ENCODE measurements at regions of chr1 and their contacts with region 1.

Region 1: GRCh38 chr1:179081687-179082332 is at the start of gene TOR3A:
- DNase-seq: peak; percentile 95
- H3K4me3 Mint-ChIP-seq: peak within 1 kb of the TSS; percentile 99
- H3K27ac Mint-ChIP-seq: peak within 1 kb of the TSS; percentile 98
- H3K4me1 Mint-ChIP-seq: peaks cover 12% of the 10 kb centered on the region
- H3K27me3 Mint-ChIP-seq: no peaks in the 10 kb centered on the region
- CTCF ChIP-seq: no peak
- total RNA-seq, gene TOR3A: 24.9 and 31.3 TPM in 2 replicates

Region 2: DNA sequence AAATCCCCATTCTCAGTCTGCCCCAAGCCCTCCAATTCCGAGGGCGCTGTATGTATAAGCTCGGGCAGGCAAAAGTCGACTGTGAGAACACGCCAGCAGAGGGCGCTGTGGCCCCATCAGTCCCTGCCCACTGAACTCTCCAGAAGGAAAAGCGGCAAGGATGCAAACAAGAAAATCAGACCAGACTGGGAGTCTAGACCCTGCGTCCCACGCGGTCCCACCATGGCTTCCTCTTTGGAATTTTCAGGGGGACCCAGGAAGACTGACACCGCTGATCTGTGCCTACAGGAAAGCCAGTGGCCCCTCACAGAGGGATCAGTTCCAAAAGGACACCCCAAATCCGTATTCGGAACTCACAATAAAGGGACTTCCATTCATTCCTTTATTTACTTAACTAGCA is 549.4 kb before region 1 on chr1:
- CTCF ChIA-PET with region 1: interaction called, 7 read pairs
- POLR2A ChIA-PET with region 1: no interaction called
- intact Hi-C with region 1: loop called (anchors 2 kb)
- DNase-seq: peak; percentile 88
- H3K4me3 Mint-ChIP-seq: no peak overlapping the region
- H3K27ac Mint-ChIP-seq: no peak overlapping the region
- H3K4me1 Mint-ChIP-seq: peaks cover 36% of the 10 kb centered on the region
- H3K27me3 Mint-ChIP-seq: peaks cover 7% of the 10 kb centered on the region
- CTCF ChIP-seq: peak; percentile 99

Region 3: GRCh38 chr1:178931858-178932551 is 149.8 kb before region 1 on chr1:
- CTCF ChIA-PET with region 1: no interaction called
- POLR2A ChIA-PET with region 1: no interaction called
- intact Hi-C with region 1: no loop called
- DNase-seq: peak; percentile 52
- H3K4me3 Mint-ChIP-seq: no peak overlapping the region
- H3K27ac Mint-ChIP-seq: peak overlapping the region; percentile 55
- H3K4me1 Mint-ChIP-seq: peaks cover 4% of the 10 kb centered on the region
- H3K27me3 Mint-ChIP-seq: no peaks in the 10 kb centered on the region
- CTCF ChIP-seq: no peak

Region 4: DNA sequence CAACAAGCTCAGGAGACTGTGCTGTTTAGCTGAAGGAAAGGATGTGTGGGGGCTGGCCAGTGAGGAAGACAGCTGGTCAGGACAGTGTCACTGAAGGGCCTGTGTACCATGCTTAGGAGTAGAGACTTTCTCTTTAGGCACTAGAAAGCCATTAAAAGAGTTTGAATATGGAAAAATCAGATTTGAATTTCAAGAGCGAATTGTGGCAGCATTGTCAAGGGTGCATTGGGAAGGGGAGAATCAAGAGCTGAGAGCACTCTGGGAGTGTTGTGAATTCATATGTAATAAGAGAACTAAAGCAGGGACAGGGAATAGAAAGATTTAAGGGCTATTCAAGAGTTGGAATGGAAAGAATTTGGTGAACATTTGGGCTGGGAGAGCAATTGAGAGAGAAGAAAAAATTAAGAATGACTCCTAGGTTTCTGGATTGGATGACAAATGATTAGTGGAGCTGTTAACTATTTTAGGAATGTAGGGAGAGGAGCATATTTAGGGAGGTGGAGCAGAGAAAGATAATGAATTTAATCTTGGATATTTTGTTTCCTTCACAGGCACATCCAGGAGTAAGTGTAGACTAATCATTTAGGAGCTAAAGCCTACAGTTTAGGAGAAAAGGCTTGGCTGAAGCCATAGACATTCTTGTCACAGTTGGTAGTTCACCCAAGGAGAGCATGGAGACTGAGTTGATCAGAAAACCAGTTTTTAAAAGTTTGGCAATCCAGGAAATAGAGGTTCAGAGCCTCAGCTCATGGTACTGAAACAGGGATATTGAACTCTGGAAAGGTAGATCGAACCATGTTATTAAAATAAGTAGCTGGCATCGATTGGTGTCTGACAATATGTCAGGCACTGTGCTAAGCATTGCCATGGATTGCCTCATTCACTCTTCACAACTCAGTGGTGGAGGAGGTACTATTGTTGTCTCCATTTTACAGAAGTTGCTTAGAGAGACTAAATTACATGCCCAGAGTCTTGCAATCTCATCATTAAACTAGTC is 23.0 kb before region 1 on chr1:
- CTCF ChIA-PET with region 1: interaction called, 56 read pairs
- POLR2A ChIA-PET with region 1: interaction called, 7 read pairs
- intact Hi-C with region 1: no loop called
- DNase-seq: no peak
- H3K4me3 Mint-ChIP-seq: peak overlapping the region; percentile 0
- H3K27ac Mint-ChIP-seq: peak overlapping the region; percentile 71
- H3K4me1 Mint-ChIP-seq: peaks cover 13% of the 10 kb centered on the region
- H3K27me3 Mint-ChIP-seq: no peaks in the 10 kb centered on the region
- CTCF ChIP-seq: no peak

Region 5: GRCh38 chr1:179129702-179130473 is 48.1 kb after region 1 on chr1:
- CTCF ChIA-PET with region 1: interaction called, 10 read pairs
- POLR2A ChIA-PET with region 1: interaction called, 4 read pairs
- intact Hi-C with region 1: no loop called
- DNase-seq: peak; percentile 38
- H3K4me3 Mint-ChIP-seq: peak overlapping the region; percentile 58
- H3K27ac Mint-ChIP-seq: peak overlapping the region; percentile 72
- H3K4me1 Mint-ChIP-seq: peaks cover 48% of the 10 kb centered on the region
- H3K27me3 Mint-ChIP-seq: no peaks in the 10 kb centered on the region
- CTCF ChIP-seq: no peak

Region 6: DNA sequence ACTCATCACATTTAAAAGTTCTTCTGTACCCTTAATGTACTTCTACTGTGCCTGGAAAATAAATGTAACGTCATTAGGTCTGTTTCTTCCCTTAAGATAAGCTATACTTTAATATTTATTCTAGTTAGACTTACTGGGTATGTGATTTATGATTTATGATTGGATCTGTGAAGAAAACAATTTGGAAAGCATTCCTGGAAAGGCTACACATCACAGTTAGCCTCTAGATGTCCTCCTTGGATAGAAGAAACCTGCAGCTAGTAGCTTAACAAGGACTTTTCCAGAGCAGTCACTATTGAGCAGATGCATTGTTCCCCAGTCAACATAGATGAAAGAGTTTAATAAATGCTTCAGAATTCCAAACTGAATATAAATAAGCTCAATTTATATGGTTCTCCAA is 169.9 kb after region 1 on chr1:
- CTCF ChIA-PET with region 1: interaction called, 24 read pairs
- POLR2A ChIA-PET with region 1: no interaction called
- intact Hi-C with region 1: loop called (anchors 1 kb)
- DNase-seq: peak; percentile 56
- H3K4me3 Mint-ChIP-seq: no peak overlapping the region
- H3K27ac Mint-ChIP-seq: no peak overlapping the region
- H3K4me1 Mint-ChIP-seq: no peaks in the 10 kb centered on the region
- H3K27me3 Mint-ChIP-seq: no peaks in the 10 kb centered on the region
- CTCF ChIP-seq: peak; percentile 73

Region 7: DNA sequence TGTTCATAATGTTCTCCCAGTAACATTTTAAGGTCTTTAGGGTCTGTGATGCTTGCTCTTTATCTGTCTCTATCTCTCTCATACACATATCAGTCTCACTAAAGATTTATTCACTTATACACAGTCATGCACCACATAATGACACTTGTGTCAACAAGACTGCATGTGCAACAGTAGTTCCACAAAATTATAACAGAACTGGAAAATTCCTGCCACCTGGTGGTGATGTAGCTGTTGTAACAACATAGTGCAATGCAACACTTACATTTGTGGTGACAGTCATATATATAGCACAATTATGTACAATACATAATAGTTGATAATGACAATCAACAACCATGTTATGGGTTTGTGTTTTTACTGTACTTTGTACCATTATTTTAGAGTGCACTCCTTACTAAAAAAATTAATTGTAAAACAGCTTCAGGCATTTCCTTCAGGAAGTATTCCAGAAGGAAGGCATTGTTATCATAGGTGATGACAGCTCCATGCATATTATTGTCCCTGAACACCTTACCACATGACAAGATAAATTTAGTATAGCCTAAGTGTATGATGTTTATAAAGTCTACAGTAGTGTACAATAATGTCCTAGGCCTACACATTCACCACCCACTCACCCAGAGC is 517.9 kb after region 1 on chr1:
- CTCF ChIA-PET with region 1: no interaction called
- POLR2A ChIA-PET with region 1: no interaction called
- intact Hi-C with region 1: loop called (anchors 2 kb)
- DNase-seq: peak; percentile 73
- H3K4me3 Mint-ChIP-seq: no peak overlapping the region
- H3K27ac Mint-ChIP-seq: no peak overlapping the region
- H3K4me1 Mint-ChIP-seq: no peaks in the 10 kb centered on the region
- H3K27me3 Mint-ChIP-seq: peaks cover 69% of the 10 kb centered on the region
- CTCF ChIP-seq: peak; percentile 52

Measured in MCF 10A (cell line).